Activated CD4-positive, alpha-beta memory T cell treated with anti-CD3 and anti-CD28 coated beads for 36 hours (primary cell): ENCODE measurements at regions of chr17 and their contacts with region 1.

Region 1: DNA sequence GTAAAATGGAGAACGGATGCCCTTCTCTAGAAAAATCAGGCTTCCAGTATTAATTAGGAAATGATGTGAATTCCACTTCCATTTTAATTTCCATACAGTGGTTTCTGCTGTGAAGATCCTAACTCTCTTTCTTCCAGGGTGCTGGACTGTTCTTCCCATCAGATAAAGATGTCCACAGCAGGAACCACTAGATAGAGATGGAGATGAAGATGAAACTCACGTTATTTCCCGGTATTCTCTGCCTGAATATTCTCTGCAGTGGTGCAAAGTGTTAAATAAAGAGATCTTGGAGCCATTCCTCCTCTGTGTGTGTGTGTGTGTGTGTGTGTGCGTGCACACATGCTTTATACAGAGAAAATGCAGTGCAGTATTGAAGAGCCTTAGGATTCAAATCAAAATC is 727.5 kb downstream of the KCNJ2 start:
- DNase-seq: no peak
- H3K4me3 Mint-ChIP-seq: no peak overlapping the region
- H3K27ac Mint-ChIP-seq: no peak overlapping the region
- H3K4me1 Mint-ChIP-seq: no peaks in the 10 kb centered on the region
- H3K27me3 Mint-ChIP-seq: no peaks in the 10 kb centered on the region

Region 2: DNA sequence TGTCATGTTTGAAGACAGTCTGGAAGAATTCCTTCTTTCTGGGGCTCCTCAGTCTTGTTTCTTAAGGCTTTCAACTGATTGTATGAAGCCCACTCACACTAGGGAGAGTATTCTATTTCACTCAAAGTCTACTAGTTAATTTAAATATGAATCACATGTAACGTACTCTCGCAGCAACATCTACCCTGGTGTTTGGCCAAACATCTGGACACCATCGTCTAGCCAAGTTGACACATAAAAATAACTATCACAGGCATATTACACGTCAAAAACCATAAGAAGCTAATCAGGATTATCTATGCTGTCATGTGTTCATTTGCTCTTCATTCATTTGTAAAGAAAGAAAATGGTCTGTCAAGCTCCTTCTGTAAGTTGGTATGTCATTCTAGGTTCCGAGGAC is 59.9 kb after region 1 on chr17:
- CTCF ChIA-PET with region 1: no interaction called
- POLR2A ChIA-PET with region 1: no interaction called
- intact Hi-C with region 1: loop called (anchors 10 kb)
- DNase-seq: no peak
- H3K4me3 Mint-ChIP-seq: no peak overlapping the region
- H3K27ac Mint-ChIP-seq: no peak overlapping the region
- H3K4me1 Mint-ChIP-seq: no peaks in the 10 kb centered on the region
- H3K27me3 Mint-ChIP-seq: no peaks in the 10 kb centered on the region